ENCODE measurements at regions of chr11 and their contacts with region 1.

Region 1: GRCh38 chr11:1335811-1336761 is 26.7 kb upstream of the TOLLIP start:
- DNase-seq: peak; percentile 69
- ATAC-seq: peak; percentile 54
- H3K4me3 ChIP-seq: peak overlapping the region; percentile 42 to 66 (median 59)
- H3K4me3 Mint-ChIP-seq: peak overlapping the region; percentile 85
- H3K27ac ChIP-seq: no peak overlapping the region
- H3K27ac Mint-ChIP-seq: peak overlapping the region; percentile 81
- H3K4me1 ChIP-seq: peaks cover 12 to 13% of the 10 kb centered on the region in 2 donors
- H3K4me1 Mint-ChIP-seq: peaks cover 21% of the 10 kb centered on the region
- H3K27me3 ChIP-seq: peaks cover 0 to 8% (median 0%) of the 10 kb centered on the region in 4 experiments
- H3K27me3 Mint-ChIP-seq: no peaks in the 10 kb centered on the region
- CTCF ChIP-seq: no peak

Region 2: GRCh38 chr11:1262172-1263006 is 73.7 kb before region 1 on chr11:
- CTCF ChIA-PET with region 1: no interaction called
- POLR2A ChIA-PET with region 1: no interaction called
- intact Hi-C with region 1: loop called (anchors 2 kb)
- DNase-seq: peak; percentile 83
- ATAC-seq: peak; percentile 94
- H3K4me3 ChIP-seq: peak overlapping the region in 4 of 5 experiments; percentile 54 to 67 (median 62)
- H3K4me3 Mint-ChIP-seq: peak overlapping the region; percentile 87
- H3K27ac ChIP-seq: peak overlapping the region; percentile 25 to 79
- H3K27ac Mint-ChIP-seq: peak overlapping the region; percentile 86
- H3K4me1 ChIP-seq: peaks cover 12 to 20% of the 10 kb centered on the region in 2 donors
- H3K4me1 Mint-ChIP-seq: peaks cover 19% of the 10 kb centered on the region
- H3K27me3 ChIP-seq: no peaks in the 10 kb centered on the region
- H3K27me3 Mint-ChIP-seq: no peaks in the 10 kb centered on the region
- CTCF ChIP-seq: no peak

Region 3: DNA sequence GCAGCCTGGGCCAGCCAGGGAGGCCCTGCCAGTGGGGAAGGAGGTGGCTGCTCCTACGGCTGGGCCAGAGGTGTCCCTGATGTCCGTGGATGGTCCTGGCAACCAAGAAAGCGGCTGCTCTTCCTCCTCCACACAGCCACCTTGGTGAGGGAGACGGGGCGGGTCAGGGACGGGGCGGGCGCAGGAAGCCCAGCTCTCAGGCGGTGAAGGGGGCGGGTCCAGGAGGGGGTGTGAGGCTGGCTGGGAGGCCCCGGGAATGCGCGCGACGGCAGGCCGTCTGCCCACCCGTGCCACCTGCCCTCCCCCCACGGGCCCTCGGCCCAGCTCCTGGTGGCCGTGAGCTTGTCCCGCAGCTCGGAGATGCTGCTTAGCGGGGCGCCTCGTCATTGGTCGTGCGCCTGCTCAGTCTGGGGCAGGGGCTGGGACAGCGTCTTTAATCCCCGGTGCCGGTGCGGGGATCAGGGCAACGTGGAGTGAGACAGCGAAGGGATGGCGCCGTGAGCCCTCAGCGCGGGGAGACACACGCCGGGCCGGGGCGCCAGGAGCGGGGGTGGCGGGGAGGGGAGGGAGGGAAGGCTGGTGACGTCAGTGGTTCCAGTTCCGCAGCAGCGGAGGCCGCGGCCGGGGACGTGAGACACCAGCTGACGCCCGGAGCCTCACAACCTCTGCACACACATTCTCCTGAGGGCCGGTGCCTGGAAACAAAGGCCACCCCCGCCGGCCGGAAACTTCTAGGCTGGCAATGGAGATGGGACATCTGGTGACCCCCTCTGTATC is 46.9 kb after region 1 on chr11:
- CTCF ChIA-PET with region 1: no interaction called
- POLR2A ChIA-PET with region 1: interaction called, 5 read pairs
- intact Hi-C with region 1: loop called (anchors 2 kb)
- DNase-seq: peak; percentile 92
- ATAC-seq: peak; percentile 76
- H3K4me3 ChIP-seq: peak overlapping the region in 4 of 5 experiments; percentile 64 to 81 (median 70)
- H3K4me3 Mint-ChIP-seq: peak overlapping the region; percentile 87
- H3K27ac ChIP-seq: peak overlapping the region; percentile 96
- H3K27ac Mint-ChIP-seq: peak overlapping the region; percentile 96
- H3K4me1 ChIP-seq: peaks cover 3 to 30% of the 10 kb centered on the region in 2 donors
- H3K4me1 Mint-ChIP-seq: peaks cover 35% of the 10 kb centered on the region
- H3K27me3 ChIP-seq: peaks cover 0 to 2% (median 0%) of the 10 kb centered on the region in 4 experiments
- H3K27me3 Mint-ChIP-seq: no peaks in the 10 kb centered on the region
- CTCF ChIP-seq: no peak